GM12878 (cell line): ENCODE measurements at regions of chr3 and their contacts with region 1.

Region 1: GRCh38 chr3:138915503-138916498 is 31.1 kb downstream of the FOXL2 start:
- DNase-seq: peak; percentile 34
- ATAC-seq: peak; percentile 97
- H3K4me3 ChIP-seq: peak overlapping the region; percentile 85
- H3K27ac ChIP-seq: peak overlapping the region; percentile 46; the same call in 1 of the 2 replicates
- H3K4me1 ChIP-seq: peaks cover 3% of the 10 kb centered on the region; the same call in 1 of the 2 replicates
- H3K27me3 ChIP-seq: peaks cover 0 to 4% of the 10 kb centered on the region in 2 experiments; a peak in 2 of 4 replicates
- CTCF ChIP-seq: peak; percentile 67 to 85 (median 82)
- EP300 ChIP-seq: no peak
- POLR2A ChIP-seq: 0 out of 2 replicates have a peak, but pooled peaks have one; percentile 25
- RAD21 ChIP-seq: peak; percentile 80

Region 2: DNA sequence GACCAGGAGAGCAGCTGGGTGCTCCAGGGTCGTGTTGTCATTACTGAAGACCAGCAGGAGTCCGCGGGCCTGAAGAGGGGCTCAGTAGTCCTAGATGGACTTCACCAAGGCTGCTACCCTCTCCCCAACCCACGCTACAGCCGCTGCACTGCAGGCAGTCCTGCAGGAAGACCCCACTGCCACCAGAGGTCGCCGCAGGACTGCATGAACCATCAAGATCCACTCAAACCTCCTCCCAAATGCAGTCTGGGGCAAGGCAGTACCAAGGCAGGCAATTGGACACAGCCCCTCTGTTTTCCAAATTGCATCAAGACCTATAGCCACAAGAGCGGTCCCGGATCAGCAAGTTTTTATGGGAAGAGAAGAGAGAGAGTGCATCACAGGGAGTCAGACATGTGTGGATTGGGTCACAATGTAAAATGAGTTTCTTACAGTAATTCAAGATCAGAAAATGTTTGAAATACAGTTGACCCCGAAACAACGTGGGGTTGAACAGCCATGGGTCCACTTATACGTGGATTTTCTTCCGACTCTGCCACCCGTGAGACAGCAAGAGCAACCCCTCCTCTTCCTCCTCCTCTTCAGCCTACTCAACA is 847.1 kb before region 1 on chr3:
- CTCF ChIA-PET with region 1: interaction called, 4 read pairs
- POLR2A ChIA-PET with region 1: no interaction called
- RAD21 ChIA-PET with region 1: interaction called, 3 read pairs
- SMC1A ChIA-PET with region 1: no interaction called
- in situ Hi-C with region 1: loop called (anchors 10 kb)
- intact Hi-C with region 1: no loop called
- DNase-seq: no peak
- ATAC-seq: peak; percentile 91
- H3K4me3 ChIP-seq: no peak overlapping the region
- H3K27ac ChIP-seq: no peak overlapping the region
- H3K4me1 ChIP-seq: peaks cover 13% of the 10 kb centered on the region
- H3K27me3 ChIP-seq: peaks cover 0 to 2% of the 10 kb centered on the region in 2 experiments; a peak in 3 of 4 replicates
- CTCF ChIP-seq: peak; percentile 94 to 99 (median 98)
- EP300 ChIP-seq: no peak
- POLR2A ChIP-seq: no peak
- RAD21 ChIP-seq: peak; percentile 100

Region 3: GRCh38 chr3:138323971-138324370 is 591.8 kb before region 1 on chr3:
- CTCF ChIA-PET with region 1: no interaction called
- POLR2A ChIA-PET with region 1: no interaction called
- RAD21 ChIA-PET with region 1: no interaction called
- SMC1A ChIA-PET with region 1: no interaction called
- in situ Hi-C with region 1: no loop called
- intact Hi-C with region 1: no loop called
- DNase-seq: no peak
- ATAC-seq: no peak
- H3K4me3 ChIP-seq: no peak overlapping the region
- H3K27ac ChIP-seq: no peak overlapping the region
- H3K4me1 ChIP-seq: no peaks in the 10 kb centered on the region
- H3K27me3 ChIP-seq: peaks cover 0 to 7% of the 10 kb centered on the region in 2 experiments; a peak in 2 of 4 replicates
- CTCF ChIP-seq: no peak
- EP300 ChIP-seq: no peak
- POLR2A ChIP-seq: no peak
- RAD21 ChIP-seq: no peak

Region 4: GRCh38 chr3:138567401-138567800 is 348.4 kb before region 1 on chr3:
- CTCF ChIA-PET with region 1: interaction called, 4 read pairs
- POLR2A ChIA-PET with region 1: no interaction called
- RAD21 ChIA-PET with region 1: interaction called, 16 read pairs
- SMC1A ChIA-PET with region 1: interaction called, 5 read pairs
- in situ Hi-C with region 1: no loop called
- intact Hi-C with region 1: no loop called
- DNase-seq: no peak
- ATAC-seq: no peak
- H3K4me3 ChIP-seq: no peak overlapping the region
- H3K27ac ChIP-seq: no peak overlapping the region
- H3K4me1 ChIP-seq: no peaks in the 10 kb centered on the region
- H3K27me3 ChIP-seq: no peaks in the 10 kb centered on the region
- CTCF ChIP-seq: peak in 1 of 3 experiments; percentile 8; a peak in 2 of 6 replicates
- EP300 ChIP-seq: no peak
- POLR2A ChIP-seq: no peak
- RAD21 ChIP-seq: no peak

Region 5: GRCh38 chr3:138678086-138678485 is 237.7 kb before region 1 on chr3:
- CTCF ChIA-PET with region 1: interaction called, 17 read pairs
- POLR2A ChIA-PET with region 1: no interaction called
- RAD21 ChIA-PET with region 1: no interaction called
- SMC1A ChIA-PET with region 1: interaction called, 4 read pairs
- in situ Hi-C with region 1: no loop called
- intact Hi-C with region 1: no loop called
- DNase-seq: no peak
- ATAC-seq: no peak
- H3K4me3 ChIP-seq: no peak overlapping the region
- H3K27ac ChIP-seq: no peak overlapping the region
- H3K4me1 ChIP-seq: no peaks in the 10 kb centered on the region
- H3K27me3 ChIP-seq: no peaks in the 10 kb centered on the region
- CTCF ChIP-seq: no peak
- EP300 ChIP-seq: no peak
- POLR2A ChIP-seq: no peak
- RAD21 ChIP-seq: no peak

Region 6: DNA sequence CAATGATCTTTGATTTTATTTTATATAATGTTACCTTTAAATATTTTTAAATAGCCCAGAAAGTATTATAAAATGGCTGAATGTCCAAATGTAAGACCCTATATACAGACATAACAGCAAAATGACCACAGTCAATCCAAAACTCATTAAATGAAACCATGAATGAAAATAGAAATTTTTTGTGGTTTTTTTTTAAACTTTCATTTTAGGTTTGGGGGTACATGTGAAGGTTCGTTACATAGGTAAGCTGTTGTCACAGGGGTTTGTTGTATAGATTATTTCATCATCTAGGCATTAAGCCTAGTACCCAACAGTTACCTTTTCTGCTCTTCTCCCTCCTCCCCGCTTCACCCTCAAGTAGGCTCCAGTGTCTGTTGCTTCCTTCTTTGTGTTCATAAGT is 198.5 kb before region 1 on chr3:
- CTCF ChIA-PET with region 1: interaction called, 11 read pairs
- POLR2A ChIA-PET with region 1: no interaction called
- RAD21 ChIA-PET with region 1: interaction called, 23 read pairs
- SMC1A ChIA-PET with region 1: interaction called, 13 read pairs
- in situ Hi-C with region 1: no loop called
- intact Hi-C with region 1: no loop called
- DNase-seq: peak; percentile 37
- ATAC-seq: peak; percentile 89
- H3K4me3 ChIP-seq: no peak overlapping the region
- H3K27ac ChIP-seq: no peak overlapping the region
- H3K4me1 ChIP-seq: peaks cover 5% of the 10 kb centered on the region; the same call in 1 of the 2 replicates
- H3K27me3 ChIP-seq: no peaks in the 10 kb centered on the region
- CTCF ChIP-seq: no peak
- EP300 ChIP-seq: no peak
- POLR2A ChIP-seq: no peak
- RAD21 ChIP-seq: no peak

Region 7: DNA sequence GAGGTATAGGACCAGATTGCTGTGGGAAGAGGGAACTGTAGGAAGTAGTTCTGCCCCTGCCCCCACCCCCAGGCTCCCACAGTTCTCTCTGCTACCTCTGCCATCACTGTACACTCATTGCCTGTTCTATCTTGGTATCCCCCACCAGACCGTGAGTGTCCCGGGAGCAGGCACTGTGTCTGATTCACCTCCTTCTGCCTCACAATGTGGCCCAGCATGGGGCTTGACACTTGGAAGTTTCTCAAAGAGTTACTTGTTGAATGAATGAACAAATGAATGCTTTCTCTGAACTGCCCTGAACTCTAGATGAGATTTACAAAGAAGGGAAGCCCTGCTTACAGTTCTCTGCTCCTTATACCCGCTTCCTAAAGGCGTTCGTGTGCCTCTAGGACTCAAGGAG is 54.0 kb before region 1 on chr3:
- CTCF ChIA-PET with region 1: interaction called, 3 read pairs
- POLR2A ChIA-PET with region 1: no interaction called
- RAD21 ChIA-PET with region 1: interaction called, 16 read pairs
- SMC1A ChIA-PET with region 1: interaction called, 3 read pairs
- in situ Hi-C with region 1: no loop called
- intact Hi-C with region 1: no loop called
- DNase-seq: no peak
- ATAC-seq: no peak; the same call in 2 of the 3 replicates
- H3K4me3 ChIP-seq: no peak overlapping the region
- H3K27ac ChIP-seq: no peak overlapping the region
- H3K4me1 ChIP-seq: peaks cover 7% of the 10 kb centered on the region
- H3K27me3 ChIP-seq: no peaks in the 10 kb centered on the region
- CTCF ChIP-seq: no peak
- EP300 ChIP-seq: no peak
- POLR2A ChIP-seq: no peak
- RAD21 ChIP-seq: no peak

Region 8: GRCh38 chr3:139110072-139110830 is 194.4 kb after region 1 on chr3:
- CTCF ChIA-PET with region 1: no interaction called
- POLR2A ChIA-PET with region 1: no interaction called
- RAD21 ChIA-PET with region 1: no interaction called
- SMC1A ChIA-PET with region 1: no interaction called
- in situ Hi-C with region 1: no loop called
- intact Hi-C with region 1: no loop called
- DNase-seq: no peak
- ATAC-seq: no peak; the same call in 2 of the 3 replicates
- H3K4me3 ChIP-seq: no peak overlapping the region
- H3K27ac ChIP-seq: no peak overlapping the region
- H3K4me1 ChIP-seq: peaks cover 5% of the 10 kb centered on the region; the same call in 1 of the 2 replicates
- H3K27me3 ChIP-seq: no peaks in the 10 kb centered on the region
- CTCF ChIP-seq: no peak
- EP300 ChIP-seq: no peak
- POLR2A ChIP-seq: no peak
- RAD21 ChIP-seq: no peak

Region 9: GRCh38 chr3:139120086-139121056 is 204.6 kb after region 1 on chr3:
- CTCF ChIA-PET with region 1: no interaction called
- POLR2A ChIA-PET with region 1: no interaction called
- RAD21 ChIA-PET with region 1: no interaction called
- SMC1A ChIA-PET with region 1: no interaction called
- in situ Hi-C with region 1: no loop called
- intact Hi-C with region 1: no loop called
- DNase-seq: no peak
- ATAC-seq: peak; percentile 63
- H3K4me3 ChIP-seq: no peak overlapping the region
- H3K27ac ChIP-seq: no peak overlapping the region
- H3K4me1 ChIP-seq: no peaks in the 10 kb centered on the region
- H3K27me3 ChIP-seq: no peaks in the 10 kb centered on the region
- CTCF ChIP-seq: no peak
- EP300 ChIP-seq: no peak
- POLR2A ChIP-seq: no peak
- RAD21 ChIP-seq: no peak